AG04449 (cell line): ENCODE measurements at regions of chr2 and their contacts with region 1.

Region 1: GRCh38 chr2:96195410-96196066 is 13.1 kb downstream of the STARD7 start:
- DNase-seq: peak; percentile 81
- H3K4me3 ChIP-seq: no peak overlapping the region
- CTCF ChIP-seq: no peak

Region 2: GRCh38 chr2:96088340-96089335 is 106.9 kb before region 1 on chr2:
- CTCF ChIA-PET with region 1: no interaction called
- POLR2A ChIA-PET with region 1: no interaction called
- DNase-seq: no peak
- H3K4me3 ChIP-seq: no peak overlapping the region
- CTCF ChIP-seq: no peak

Region 3: GRCh38 chr2:96208143-96209010 is 12.8 kb after region 1 on chr2 and contains the start of gene STARD7:
- CTCF ChIA-PET with region 1: interaction called, 5 read pairs
- POLR2A ChIA-PET with region 1: interaction called, 10 read pairs
- DNase-seq: peak; percentile 80
- H3K4me3 ChIP-seq: peak within 1 kb of the TSS; percentile 86
- CTCF ChIP-seq: peak; percentile 21

Region 4: GRCh38 chr2:96470636-96471035 is 275.1 kb after region 1 on chr2:
- CTCF ChIA-PET with region 1: no interaction called
- POLR2A ChIA-PET with region 1: no interaction called
- DNase-seq: no peak
- H3K4me3 ChIP-seq: no peak overlapping the region
- CTCF ChIP-seq: peak; percentile 75